ENCODE measurements at regions of chr2 and their contacts with region 1.

Region 1: GRCh38 chr2:200703127-200703925 is 108.4 kb upstream of the BZW1 start:
- DNase-seq: peak in 1 of 5 donors; percentile 15
- ATAC-seq: no peak
- H3K4me3 ChIP-seq: no peak overlapping the region
- H3K27ac ChIP-seq: no peak overlapping the region
- H3K4me1 ChIP-seq: peaks cover 0 to 9% (median 0%) of the 10 kb centered on the region in 12 donors
- H3K27me3 ChIP-seq: no peaks in the 10 kb centered on the region
- CTCF ChIP-seq: peak in 11 of 12 donors; percentile 13 to 67 (median 57)
- POLR2A ChIP-seq: no peak

Region 2: DNA sequence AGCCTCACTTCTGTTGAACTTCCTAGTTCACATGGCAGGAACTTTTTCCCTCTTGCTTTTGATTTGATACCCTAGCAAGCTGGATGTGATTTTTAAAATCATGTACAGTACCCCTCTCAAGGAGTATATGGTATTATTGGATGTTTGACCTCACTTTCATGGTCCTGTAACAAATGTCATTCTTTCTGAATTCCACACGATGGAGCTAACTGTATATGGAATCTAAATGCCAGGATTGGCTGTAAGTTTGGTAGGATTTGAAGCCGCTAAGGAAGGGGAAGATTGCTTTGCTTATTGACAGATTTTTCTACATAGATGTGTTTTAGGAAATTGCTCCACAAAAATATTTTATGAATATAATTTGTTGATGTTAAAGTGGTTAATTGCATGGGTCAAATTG is 729.6 kb before region 1 on chr2:
- intact Hi-C with region 1: loop called in 9 of 10 experiments (anchors 5 to 10 kb)
- DNase-seq: no peak
- ATAC-seq: peak in 3 of 4 donors; percentile 39 to 71 (median 48)
- H3K4me3 ChIP-seq: no peak overlapping the region
- H3K27ac ChIP-seq: no peak overlapping the region
- H3K4me1 ChIP-seq: no peaks in the 10 kb centered on the region
- H3K27me3 ChIP-seq: no peaks in the 10 kb centered on the region
- CTCF ChIP-seq: peak; percentile 22 to 60 (median 46)
- POLR2A ChIP-seq: no peak

Region 3: GRCh38 chr2:199979832-199980628 is 723.3 kb before region 1 on chr2:
- intact Hi-C with region 1: loop called in 9 of 10 experiments (anchors 5 to 10 kb)
- DNase-seq: peak; percentile 76 to 88 (median 79)
- ATAC-seq: peak in 3 of 4 donors; percentile 75 to 82 (median 79)
- H3K4me3 ChIP-seq: peak overlapping the region in 5 of 12 donors; percentile 9 to 36 (median 23)
- H3K27ac ChIP-seq: no peak overlapping the region
- H3K4me1 ChIP-seq: peaks cover 0 to 9% (median 1%) of the 10 kb centered on the region in 12 donors
- H3K27me3 ChIP-seq: no peaks in the 10 kb centered on the region
- CTCF ChIP-seq: peak; percentile 84 to 96 (median 88)
- POLR2A ChIP-seq: no peak

Region 4: DNA sequence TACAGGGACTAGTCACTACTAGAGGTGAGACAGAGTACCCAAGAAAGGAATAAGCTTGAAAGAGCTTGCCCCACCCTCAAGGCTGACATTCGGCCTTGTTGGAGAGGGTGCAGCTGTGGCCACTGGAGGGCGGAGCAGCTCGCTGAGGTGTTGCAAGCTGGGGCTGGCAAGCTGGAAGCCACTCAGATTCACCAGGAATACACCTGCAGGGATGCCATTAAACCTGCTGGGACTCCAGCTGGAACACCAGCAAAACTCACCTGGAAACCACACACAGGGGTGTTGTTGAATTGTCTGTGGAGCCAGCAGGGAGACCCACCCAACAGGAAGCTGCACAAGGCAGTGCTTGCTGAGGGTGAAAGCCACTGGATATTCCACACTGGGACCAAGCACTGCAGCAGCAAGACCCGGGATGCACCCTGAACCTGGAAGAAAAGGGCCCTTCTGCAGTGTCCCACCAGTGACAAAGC is 219.6 kb before region 1 on chr2:
- intact Hi-C with region 1: loop called in 1 of 10 experiments (anchors 5 kb)
- DNase-seq: no peak
- ATAC-seq: peak in 3 of 4 donors; percentile 27 to 28 (median 28)
- H3K4me3 ChIP-seq: no peak overlapping the region
- H3K27ac ChIP-seq: no peak overlapping the region
- H3K4me1 ChIP-seq: peaks cover 0 to 5% (median 0%) of the 10 kb centered on the region in 12 donors
- H3K27me3 ChIP-seq: no peaks in the 10 kb centered on the region
- CTCF ChIP-seq: peak in 6 of 12 donors; percentile 7 to 38 (median 18)
- POLR2A ChIP-seq: no peak

Region 5: DNA sequence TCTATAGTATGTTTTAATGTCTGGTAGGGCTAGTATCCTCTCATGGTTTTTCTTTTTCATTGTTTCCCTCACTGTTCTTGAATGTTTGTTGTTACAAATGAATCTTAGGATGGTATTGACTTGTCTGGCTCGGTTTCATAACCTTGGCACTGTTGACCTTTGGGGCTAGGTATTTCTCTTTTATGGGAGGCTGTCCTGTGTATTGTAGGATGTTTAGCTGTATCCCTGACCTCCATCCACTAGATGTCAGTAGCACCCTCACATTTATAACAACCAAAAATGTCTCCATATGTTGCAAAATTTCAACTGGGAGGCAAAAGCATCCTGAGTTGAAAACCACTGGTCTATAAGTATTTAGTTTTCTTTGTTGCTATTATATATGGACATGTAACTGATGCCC is 124.5 kb before region 1 on chr2:
- intact Hi-C with region 1: loop called in 8 of 10 experiments (anchors 2 to 10 kb)
- DNase-seq: no peak
- ATAC-seq: no peak
- H3K4me3 ChIP-seq: no peak overlapping the region
- H3K27ac ChIP-seq: no peak overlapping the region
- H3K4me1 ChIP-seq: no peaks in the 10 kb centered on the region
- H3K27me3 ChIP-seq: no peaks in the 10 kb centered on the region
- CTCF ChIP-seq: peak in 6 of 12 donors; percentile 8 to 30 (median 20)
- POLR2A ChIP-seq: no peak

Region 6: DNA sequence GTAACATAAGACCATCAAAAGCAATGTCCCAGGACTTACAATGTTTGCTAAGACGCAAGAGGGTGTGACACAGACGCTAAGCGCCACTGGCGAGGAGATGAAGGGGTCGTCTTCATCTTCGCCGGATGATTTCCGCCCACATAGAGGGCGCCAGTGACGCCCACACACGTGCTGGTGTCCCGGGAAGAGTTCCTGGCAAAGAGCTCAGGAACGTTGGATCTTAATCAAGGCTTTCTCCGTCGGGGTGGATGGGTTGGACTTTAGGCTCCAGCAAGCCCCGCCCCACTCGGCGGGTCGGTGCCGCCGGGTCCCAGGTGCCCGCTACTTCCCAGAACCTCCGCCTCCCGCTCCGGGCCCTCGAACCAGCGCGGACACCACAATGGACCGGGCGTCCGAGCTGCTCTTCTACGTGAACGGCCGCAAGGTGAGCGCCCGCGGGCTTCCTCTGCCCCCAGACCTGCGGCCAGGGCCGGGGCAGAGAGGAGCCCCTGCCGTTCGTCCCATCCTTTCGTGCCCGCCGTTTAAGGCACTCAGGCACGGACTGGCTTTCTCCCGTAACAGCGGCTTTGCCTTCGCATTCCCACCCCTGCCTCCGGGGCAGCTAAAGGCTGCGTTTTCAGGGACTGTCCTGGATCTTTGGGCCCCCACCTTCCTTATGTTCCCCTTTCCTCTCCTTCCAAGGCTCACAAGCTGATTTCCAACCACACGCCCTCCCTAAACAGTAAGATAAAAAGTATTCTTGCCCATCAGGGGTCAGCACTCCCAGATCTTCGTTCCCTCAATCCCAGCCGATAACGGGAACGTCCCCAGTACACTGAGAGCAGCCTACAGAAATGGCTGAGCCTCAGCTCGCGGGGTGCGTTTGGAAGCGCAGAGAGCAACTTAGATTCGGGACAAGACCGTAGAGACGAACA is 117.3 kb before region 1 on chr2 and contains the start of gene AOX1:
- intact Hi-C with region 1: loop called in 1 of 10 experiments (anchors 10 kb)
- DNase-seq: peak; percentile 18 to 66 (median 37)
- ATAC-seq: peak; percentile 41 to 80 (median 74)
- H3K4me3 ChIP-seq: peak within 1 kb of the TSS; percentile 8 to 69 (median 54)
- H3K27ac ChIP-seq: peak within 1 kb of the TSS in 7 of 12 donors; percentile 9 to 78 (median 41)
- H3K4me1 ChIP-seq: peaks cover 0 to 13% (median 6%) of the 10 kb centered on the region in 12 donors
- H3K27me3 ChIP-seq: peaks cover 0 to 7% (median 0%) of the 10 kb centered on the region in 9 donors
- CTCF ChIP-seq: peak in 1 of 12 donors; percentile 12
- POLR2A ChIP-seq: no peak
- total RNA-seq, gene AOX1: 0.76 to 33.4 (median 2.9) TPM

Region 7: DNA sequence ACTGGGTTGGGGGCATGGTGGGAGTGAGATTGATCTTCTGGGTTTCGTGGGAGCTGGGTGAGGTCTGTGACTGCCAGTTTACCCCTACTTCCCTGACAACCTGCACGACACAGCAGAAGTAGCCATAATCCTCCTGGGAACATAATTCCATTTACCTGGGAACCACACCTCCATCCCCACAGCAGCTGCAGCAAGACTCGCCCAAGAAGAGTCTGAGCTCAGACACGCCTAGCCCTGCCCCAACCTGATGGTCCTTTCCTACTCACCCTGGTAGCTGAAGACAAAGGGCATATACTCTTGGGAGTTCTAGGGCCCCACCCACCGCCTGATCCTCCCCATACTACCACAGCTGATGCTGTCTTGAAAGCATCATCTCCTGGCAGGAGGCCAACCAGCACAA is 610.0 kb after region 1 on chr2:
- intact Hi-C with region 1: no loop called
- DNase-seq: no peak
- ATAC-seq: no peak
- H3K4me3 ChIP-seq: no peak overlapping the region
- H3K27ac ChIP-seq: no peak overlapping the region
- H3K4me1 ChIP-seq: no peaks in the 10 kb centered on the region
- H3K27me3 ChIP-seq: no peaks in the 10 kb centered on the region
- CTCF ChIP-seq: no peak
- POLR2A ChIP-seq: no peak